Posterior vena cava (tissue), 2 donors: ENCODE measurements at regions of chr10 and their contacts with region 1.

Region 1: DNA sequence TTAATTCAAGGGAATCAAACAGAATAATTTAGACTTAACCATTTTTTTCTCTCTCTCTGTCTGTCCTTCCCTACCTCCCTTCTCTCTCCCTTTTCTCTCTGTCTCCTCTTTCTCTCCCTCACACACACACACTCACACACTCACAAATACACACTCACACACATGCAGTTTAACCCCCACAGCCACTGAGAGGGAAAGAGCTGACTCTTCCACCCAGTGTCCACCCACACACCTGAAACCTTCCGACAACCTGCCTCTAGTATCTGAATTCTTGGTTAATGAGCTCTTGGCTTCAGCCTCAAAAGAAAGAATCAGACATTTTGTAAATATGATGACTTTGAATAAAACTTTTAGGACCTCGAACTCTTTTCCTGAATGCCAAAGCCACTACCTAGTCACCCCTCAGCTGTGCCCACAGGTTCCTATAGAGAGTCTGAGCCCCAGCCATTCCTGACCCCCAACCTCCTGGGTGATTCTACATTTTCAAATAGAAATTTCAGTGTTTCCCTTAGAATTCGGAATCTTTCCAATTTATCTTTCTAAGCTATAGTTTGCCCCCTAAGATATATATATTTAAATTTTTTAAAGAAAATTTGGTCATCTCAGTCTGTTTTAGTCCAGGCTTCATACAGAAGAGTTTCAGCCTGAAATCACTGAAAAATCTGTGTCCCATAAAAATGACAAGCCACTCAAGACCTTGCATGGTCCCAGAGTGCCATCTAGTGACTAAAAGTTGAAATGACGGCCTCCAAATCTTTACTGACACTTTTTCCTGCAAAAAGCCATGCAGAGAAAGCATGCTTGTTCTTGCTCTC is 202.8 kb downstream of the IPMK start:
- DNase-seq: no peak

Region 2: GRCh38 chr10:57420881-57421280 is 644.0 kb before region 1 on chr10:
- intact Hi-C with region 1: no loop called
- DNase-seq: no peak

Region 3: DNA sequence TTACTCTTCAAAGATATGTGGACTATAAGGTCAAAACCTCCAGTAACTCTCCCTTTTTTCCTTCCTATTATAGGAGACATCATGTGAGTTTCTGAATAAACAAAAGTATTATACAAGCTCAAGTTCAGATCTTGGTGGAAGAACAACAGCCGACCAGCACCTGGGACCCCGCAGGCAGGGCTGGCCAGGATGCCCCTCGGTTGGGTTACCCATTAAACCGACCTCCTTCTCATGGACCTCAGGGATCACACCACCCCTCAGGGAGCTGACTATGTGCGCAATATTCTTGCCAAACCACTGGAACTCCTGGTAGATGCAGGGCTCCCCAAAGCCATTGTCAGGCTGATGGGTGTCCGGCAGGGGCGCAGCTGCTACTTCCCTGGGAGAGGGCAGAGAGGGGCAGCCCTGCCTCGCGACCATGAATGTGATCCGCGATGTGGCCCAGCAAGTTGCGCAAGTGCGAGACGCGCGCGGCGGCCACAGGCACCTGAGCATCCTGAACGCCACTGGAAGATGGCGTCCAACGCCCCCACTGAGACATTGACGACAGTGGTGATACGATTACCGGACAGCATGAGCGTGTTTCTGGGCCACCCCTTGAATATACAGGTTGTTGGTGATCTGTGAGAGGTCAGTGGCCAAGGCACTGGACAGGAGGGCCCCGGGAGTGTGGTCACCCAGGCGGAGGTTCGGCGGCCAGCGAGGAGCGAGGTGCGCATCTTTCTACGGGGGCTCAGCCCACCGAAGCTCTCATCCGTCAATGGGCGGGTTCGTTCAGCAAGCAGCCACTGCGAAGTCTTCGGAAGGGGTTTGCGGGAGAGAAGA is 41.5 kb after region 1 on chr10:
- intact Hi-C with region 1: loop called in 1 of 2 experiments (anchors 1 kb)
- DNase-seq: no peak